Activated CD8-positive, alpha-beta memory T cell treated with anti-CD3 and anti-CD28 coated beads, Interleukin-2, amount 10 ng/mL, durations not matched to agents 7 days and 5 days (primary cell): ENCODE measurements at regions of chr22 and their contacts with region 1.

Region 1: GRCh38 chr22:31211862-31212730 is at the start of gene LIMK2:
- DNase-seq: peak; percentile 98
- ATAC-seq: peak; percentile 98
- H3K4me3 Mint-ChIP-seq: peak within 1 kb of the TSS; percentile 81
- H3K27ac Mint-ChIP-seq: peak within 1 kb of the TSS; percentile 88
- H3K4me1 Mint-ChIP-seq: peaks cover 36% of the 10 kb centered on the region
- H3K27me3 Mint-ChIP-seq: no peaks in the 10 kb centered on the region
- total RNA-seq, gene LIMK2: 32.2 to 47.3 TPM

Region 2: GRCh38 chr22:31107178-31107893 is 104.8 kb before region 1 on chr22 and contains the start of gene SELENOM:
- CTCF ChIA-PET with region 1: interaction called, 23 read pairs
- DNase-seq: peak; percentile 92
- ATAC-seq: peak; percentile 97
- H3K4me3 Mint-ChIP-seq: peak within 1 kb of the TSS; percentile 78
- H3K27ac Mint-ChIP-seq: peak within 1 kb of the TSS; percentile 31
- H3K4me1 Mint-ChIP-seq: peaks cover 12% of the 10 kb centered on the region
- H3K27me3 Mint-ChIP-seq: peaks cover 12% of the 10 kb centered on the region
- total RNA-seq, gene SELENOM: 0.49 to 1.5 TPM

Region 3: DNA sequence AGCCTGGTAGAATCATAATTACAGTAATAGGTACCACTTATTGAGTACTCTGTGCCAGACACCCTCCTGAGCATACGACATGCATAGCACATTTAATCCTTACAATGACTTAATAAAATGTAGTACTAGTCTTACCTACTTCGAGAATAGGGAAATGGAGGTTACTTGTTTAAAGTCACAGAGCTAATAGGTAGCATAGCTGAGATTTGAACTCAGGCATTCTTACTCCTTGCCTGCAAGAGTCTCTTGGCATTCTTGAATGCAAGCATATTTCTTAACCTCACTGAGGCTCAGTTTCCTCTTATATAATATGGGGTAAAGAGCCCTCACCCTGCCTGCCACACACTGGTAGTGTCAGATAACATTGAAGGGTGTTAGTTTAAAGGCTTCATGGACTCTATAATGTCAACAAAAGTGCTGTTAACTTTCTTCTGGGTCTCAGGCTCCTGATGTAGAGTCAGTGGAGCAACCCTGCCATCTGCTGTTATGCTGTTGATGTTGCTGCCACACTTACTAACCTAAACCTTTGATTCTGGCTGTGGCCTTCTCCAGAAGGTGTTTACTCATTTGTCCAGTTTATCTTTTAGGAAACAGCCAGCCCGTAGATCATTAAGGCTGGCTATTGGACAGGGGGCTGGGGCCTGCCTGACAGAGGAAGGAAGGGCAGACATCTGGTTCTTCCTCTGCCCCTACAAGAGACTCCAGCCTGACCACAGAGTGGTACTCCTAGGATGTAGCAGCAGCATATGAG is 18.9 kb after region 1 on chr22:
- CTCF ChIA-PET with region 1: interaction called, 55 read pairs
- DNase-seq: peak; percentile 54
- ATAC-seq: peak; percentile 72
- H3K4me3 Mint-ChIP-seq: no peak overlapping the region
- H3K27ac Mint-ChIP-seq: peak overlapping the region; percentile 60
- H3K4me1 Mint-ChIP-seq: peaks cover 47% of the 10 kb centered on the region
- H3K27me3 Mint-ChIP-seq: no peaks in the 10 kb centered on the region

Region 4: GRCh38 chr22:31248138-31248745 is 36.1 kb after region 1 on chr22:
- CTCF ChIA-PET with region 1: interaction called, 23 read pairs
- DNase-seq: peak; percentile 89
- ATAC-seq: peak; percentile 99
- H3K4me3 Mint-ChIP-seq: peak overlapping the region; percentile 38
- H3K27ac Mint-ChIP-seq: peak overlapping the region; percentile 68
- H3K4me1 Mint-ChIP-seq: peaks cover 35% of the 10 kb centered on the region
- H3K27me3 Mint-ChIP-seq: no peaks in the 10 kb centered on the region

Region 5: DNA sequence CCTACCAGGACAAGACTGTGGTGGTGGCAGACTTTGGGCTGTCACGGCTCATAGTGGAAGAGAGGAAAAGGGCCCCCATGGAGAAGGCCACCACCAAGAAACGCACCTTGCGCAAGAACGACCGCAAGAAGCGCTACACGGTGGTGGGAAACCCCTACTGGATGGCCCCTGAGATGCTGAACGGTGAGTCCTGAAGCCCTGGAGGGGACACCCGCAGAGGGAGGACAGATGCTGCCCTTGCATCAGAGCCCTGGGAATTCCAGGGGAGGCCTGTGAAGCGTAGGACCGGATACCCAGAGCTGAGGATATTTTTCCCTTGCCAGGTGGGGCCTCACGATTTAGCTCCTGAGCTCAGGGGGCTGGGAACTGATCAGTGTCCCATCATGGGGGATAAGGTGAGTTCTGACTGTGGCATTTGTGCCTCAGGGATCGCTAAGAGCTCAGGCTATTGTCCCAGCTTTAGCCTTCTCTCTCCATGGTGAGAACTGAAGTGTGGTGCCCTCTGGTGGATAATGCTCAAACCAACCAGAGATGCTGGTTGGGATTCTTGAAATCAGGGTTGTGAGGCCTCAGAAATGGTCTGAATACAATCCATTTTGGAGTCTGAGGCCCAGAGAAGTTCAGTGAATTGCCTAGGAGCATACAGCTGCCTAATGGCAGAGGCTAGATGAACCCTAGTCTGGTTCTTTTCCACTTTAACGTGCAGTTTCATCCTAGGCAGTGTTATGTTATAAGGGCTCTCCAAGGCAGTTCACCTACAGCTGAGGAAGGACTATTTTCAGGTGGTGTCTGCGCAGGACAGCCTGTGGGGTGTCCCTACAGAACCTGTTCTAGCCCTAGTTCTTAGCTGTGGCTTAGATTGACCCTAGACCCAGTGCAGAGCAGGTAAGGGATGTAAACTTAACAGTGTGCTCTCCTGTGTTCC is 60.7 kb after region 1 on chr22:
- CTCF ChIA-PET with region 1: interaction called, 62 read pairs
- DNase-seq: peak; percentile 64
- ATAC-seq: peak; percentile 68
- H3K4me3 Mint-ChIP-seq: no peak overlapping the region
- H3K27ac Mint-ChIP-seq: no peak overlapping the region
- H3K4me1 Mint-ChIP-seq: no peaks in the 10 kb centered on the region
- H3K27me3 Mint-ChIP-seq: no peaks in the 10 kb centered on the region

Region 6: GRCh38 chr22:31290494-31291471 is 78.7 kb after region 1 on chr22:
- CTCF ChIA-PET with region 1: interaction called, 36 read pairs
- DNase-seq: peak; percentile 97
- ATAC-seq: peak; percentile 89
- H3K4me3 Mint-ChIP-seq: peak overlapping the region; percentile 97
- H3K27ac Mint-ChIP-seq: peak overlapping the region; percentile 99
- H3K4me1 Mint-ChIP-seq: peaks cover 75% of the 10 kb centered on the region
- H3K27me3 Mint-ChIP-seq: no peaks in the 10 kb centered on the region